K562 (cell line): ENCODE measurements at regions of chr2 and their contacts with region 1.

Region 1: GRCh38 chr2:135144344-135144743 is 92.3 kb downstream of the RAB3GAP1 start:
- DNase-seq: no peak
- ATAC-seq: no peak
- H3K4me3 ChIP-seq: no peak overlapping the region
- H3K27ac ChIP-seq: no peak overlapping the region
- H3K4me1 ChIP-seq: no peaks in the 10 kb centered on the region
- H3K27me3 ChIP-seq: no peaks in the 10 kb centered on the region
- CTCF ChIP-seq: no peak
- EP300 ChIP-seq: no peak
- POLR2A ChIP-seq: no peak
- RAD21 ChIP-seq: no peak

Region 2: GRCh38 chr2:134912361-134912760 is 232.0 kb before region 1 on chr2:
- CTCF ChIA-PET with region 1: no interaction called
- POLR2A ChIA-PET with region 1: no interaction called
- in situ Hi-C with region 1: no loop called
- intact Hi-C with region 1: no loop called
- DNase-seq: no peak
- ATAC-seq: no peak
- H3K4me3 ChIP-seq: no peak overlapping the region
- H3K27ac ChIP-seq: no peak overlapping the region
- H3K4me1 ChIP-seq: peaks cover 3 to 4% of the 10 kb centered on the region in 2 experiments; a peak in 3 of 5 replicates
- H3K27me3 ChIP-seq: no peaks in the 10 kb centered on the region
- CTCF ChIP-seq: no peak
- EP300 ChIP-seq: no peak
- POLR2A ChIP-seq: no peak
- RAD21 ChIP-seq: no peak

Region 3: GRCh38 chr2:135052042-135052876 is 92.1 kb before region 1 on chr2 and contains the start of gene RAB3GAP1:
- CTCF ChIA-PET with region 1: no interaction called
- POLR2A ChIA-PET with region 1: no interaction called
- in situ Hi-C with region 1: no loop called
- intact Hi-C with region 1: loop called (anchors 5 kb)
- DNase-seq: peak; percentile 89 to 92 (median 90)
- ATAC-seq: peak; percentile 90
- H3K4me3 ChIP-seq: peak within 1 kb of the TSS; percentile 56
- H3K27ac ChIP-seq: peak within 1 kb of the TSS; percentile 85
- H3K4me1 ChIP-seq: peaks cover 12 to 19% of the 10 kb centered on the region in 2 experiments; a peak in 4 of 5 replicates
- H3K27me3 ChIP-seq: no peaks in the 10 kb centered on the region
- CTCF ChIP-seq: no peak
- EP300 ChIP-seq: peak; percentile 7; the same call in 1 of the 2 replicates
- POLR2A ChIP-seq: peak; percentile 98
- RAD21 ChIP-seq: 0 out of 4 replicates have a peak, but pooled peaks of 1 of the 2 experiments have one; percentile 8
- polyA plus RNA-seq, gene RAB3GAP1: 15.5 to 35.6 TPM